ENCODE measurements at regions of chr2 and their contacts with region 1.

Region 1: GRCh38 chr2:85288244-85288725 is 39.5 kb downstream of the TGOLN2 start:
- DNase-seq: no peak
- H3K4me3 Mint-ChIP-seq: no peak overlapping the region
- H3K27ac Mint-ChIP-seq: no peak overlapping the region
- H3K4me1 Mint-ChIP-seq: peaks cover 16% of the 10 kb centered on the region
- H3K27me3 Mint-ChIP-seq: no peaks in the 10 kb centered on the region

Region 2: GRCh38 chr2:85188852-85189587 is 99.3 kb before region 1 on chr2:
- CTCF ChIA-PET with region 1: no interaction called
- POLR2A ChIA-PET with region 1: no interaction called
- intact Hi-C with region 1: loop called (anchors 5 kb)
- DNase-seq: no peak
- H3K4me3 Mint-ChIP-seq: no peak overlapping the region
- H3K27ac Mint-ChIP-seq: no peak overlapping the region
- H3K4me1 Mint-ChIP-seq: no peaks in the 10 kb centered on the region
- H3K27me3 Mint-ChIP-seq: peaks cover 6% of the 10 kb centered on the region

Region 3: DNA sequence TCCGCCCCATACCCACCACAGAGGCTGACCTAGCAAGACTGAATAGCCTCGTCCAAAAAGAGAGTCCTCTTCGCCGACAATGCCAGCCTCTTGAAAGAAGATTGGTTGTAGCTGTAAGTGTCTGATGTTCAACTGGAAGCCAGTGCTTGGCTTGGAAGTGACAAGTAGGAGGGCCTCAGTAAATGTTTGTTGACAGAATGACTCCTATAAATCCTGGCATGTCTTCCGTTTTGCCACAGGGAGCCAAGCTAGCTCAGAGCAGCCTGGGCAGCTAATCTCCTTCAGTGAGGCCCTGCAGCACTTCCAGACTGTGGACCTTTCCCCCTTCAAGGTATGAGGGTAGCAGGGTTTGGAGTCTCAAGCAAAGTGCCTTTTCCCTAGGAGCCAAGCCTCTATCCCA is 81.2 kb after region 1 on chr2:
- CTCF ChIA-PET with region 1: no interaction called
- POLR2A ChIA-PET with region 1: no interaction called
- intact Hi-C with region 1: no loop called
- DNase-seq: no peak
- H3K4me3 Mint-ChIP-seq: no peak overlapping the region
- H3K27ac Mint-ChIP-seq: no peak overlapping the region
- H3K4me1 Mint-ChIP-seq: no peaks in the 10 kb centered on the region
- H3K27me3 Mint-ChIP-seq: no peaks in the 10 kb centered on the region

Measured in activated CD4-positive, alpha-beta memory T cell treated with anti-CD3 and anti-CD28 coated beads for 36 hours (primary cell).